ENCODE measurements at regions of chr4 and their contacts with region 1.

Region 1: DNA sequence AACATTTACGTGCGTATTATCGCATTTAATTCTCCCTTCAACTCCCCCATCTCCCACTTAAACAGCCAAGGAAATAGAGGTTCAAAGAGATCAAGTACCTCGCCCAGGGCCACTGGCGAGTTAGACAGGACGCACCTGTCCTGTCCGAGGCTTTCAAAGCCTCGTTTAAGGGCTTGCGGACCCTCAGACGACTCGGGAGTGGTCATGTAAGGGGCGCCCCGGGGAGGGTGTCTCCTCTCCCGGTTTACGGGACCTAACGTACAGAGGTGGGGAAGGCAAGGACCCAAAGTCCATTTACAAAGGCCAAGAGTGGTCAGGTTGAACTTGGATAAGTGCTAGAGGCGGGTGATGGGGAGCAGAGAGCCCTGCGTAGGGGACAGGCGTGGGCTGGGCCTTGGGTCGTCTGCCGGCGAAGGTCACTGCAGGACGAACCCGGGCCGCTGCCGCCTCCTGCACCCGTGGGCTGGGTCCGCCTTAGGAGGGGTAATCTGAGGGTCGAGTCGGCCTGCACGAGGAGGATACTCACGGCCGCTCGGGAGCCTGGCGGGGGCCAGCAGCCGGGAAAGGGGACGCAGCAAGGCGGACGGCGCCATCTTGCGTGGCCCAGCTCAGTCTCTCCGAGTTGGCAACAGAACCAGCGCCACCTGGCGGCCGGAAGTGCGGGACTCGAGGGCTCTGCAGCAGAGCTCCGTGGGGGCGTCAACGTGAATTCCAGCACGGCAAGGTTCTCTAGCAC is 5.9 kb upstream of the NAA15 start:
- DNase-seq: peak; percentile 91
- CTCF ChIP-seq: peak; percentile 94

Region 2: DNA sequence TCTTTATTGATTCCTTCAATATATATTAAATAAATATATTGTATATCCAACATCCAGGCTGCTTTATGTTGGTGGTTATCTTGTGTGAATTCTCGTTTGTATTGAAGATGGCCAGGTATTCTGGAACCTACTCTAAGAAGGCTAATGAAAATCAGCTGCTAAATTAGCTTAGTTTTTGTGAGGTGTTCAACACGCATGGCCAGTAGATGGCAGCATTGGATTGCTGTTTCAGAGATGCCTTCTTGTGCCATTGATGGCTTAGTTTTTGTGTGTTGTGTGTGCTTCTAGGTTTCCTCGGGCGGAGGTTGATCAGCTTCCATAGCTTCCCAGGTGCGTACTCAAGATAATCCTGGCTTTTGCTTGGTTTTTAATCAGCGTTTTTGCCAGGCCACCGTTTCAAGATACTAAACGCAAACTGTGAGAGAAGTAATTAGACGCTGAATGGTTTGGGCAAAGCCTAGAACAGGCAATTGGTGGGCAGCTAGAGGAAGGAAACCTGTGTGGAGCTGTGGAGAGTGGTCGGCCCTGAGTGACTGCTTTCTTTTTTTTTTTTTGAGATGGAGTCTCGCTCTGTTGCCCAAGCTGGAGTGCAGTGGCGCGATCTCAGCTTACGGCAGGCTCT is 264.6 kb before region 1 on chr4:
- in situ Hi-C with region 1: loop called (anchors 10 kb)
- DNase-seq: peak; percentile 77
- CTCF ChIP-seq: peak; percentile 76

Measured in GM13976 (cell line).